AG04449 (cell line): ENCODE measurements at regions of chr9 and their contacts with region 1.

Region 1: DNA sequence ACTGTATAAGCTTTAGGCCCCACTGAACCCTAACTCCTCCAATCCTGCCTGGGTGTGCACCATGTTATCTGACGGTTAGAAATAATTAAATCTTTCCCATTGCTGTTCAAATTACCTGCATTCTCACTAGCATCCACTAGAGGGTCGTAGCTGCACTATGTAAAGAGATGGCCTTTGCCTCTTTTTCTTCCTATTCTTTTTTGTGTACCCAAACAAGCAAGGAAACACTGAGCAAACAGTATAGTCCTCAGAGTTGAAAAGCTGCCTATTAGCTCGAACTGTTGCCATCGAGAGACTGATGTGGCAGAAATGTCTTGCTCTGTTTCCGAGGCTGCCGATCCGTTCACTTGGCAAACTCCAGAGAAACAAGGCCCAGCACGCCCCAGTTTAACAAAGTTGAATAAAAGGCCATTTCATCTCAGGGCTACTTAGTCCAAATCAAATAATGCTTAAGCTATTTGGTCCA is 163.8 kb upstream of the TRPM3 start:
- DNase-seq: peak; percentile 29
- H3K4me3 ChIP-seq: no peak overlapping the region
- CTCF ChIP-seq: peak; percentile 73

Region 2: DNA sequence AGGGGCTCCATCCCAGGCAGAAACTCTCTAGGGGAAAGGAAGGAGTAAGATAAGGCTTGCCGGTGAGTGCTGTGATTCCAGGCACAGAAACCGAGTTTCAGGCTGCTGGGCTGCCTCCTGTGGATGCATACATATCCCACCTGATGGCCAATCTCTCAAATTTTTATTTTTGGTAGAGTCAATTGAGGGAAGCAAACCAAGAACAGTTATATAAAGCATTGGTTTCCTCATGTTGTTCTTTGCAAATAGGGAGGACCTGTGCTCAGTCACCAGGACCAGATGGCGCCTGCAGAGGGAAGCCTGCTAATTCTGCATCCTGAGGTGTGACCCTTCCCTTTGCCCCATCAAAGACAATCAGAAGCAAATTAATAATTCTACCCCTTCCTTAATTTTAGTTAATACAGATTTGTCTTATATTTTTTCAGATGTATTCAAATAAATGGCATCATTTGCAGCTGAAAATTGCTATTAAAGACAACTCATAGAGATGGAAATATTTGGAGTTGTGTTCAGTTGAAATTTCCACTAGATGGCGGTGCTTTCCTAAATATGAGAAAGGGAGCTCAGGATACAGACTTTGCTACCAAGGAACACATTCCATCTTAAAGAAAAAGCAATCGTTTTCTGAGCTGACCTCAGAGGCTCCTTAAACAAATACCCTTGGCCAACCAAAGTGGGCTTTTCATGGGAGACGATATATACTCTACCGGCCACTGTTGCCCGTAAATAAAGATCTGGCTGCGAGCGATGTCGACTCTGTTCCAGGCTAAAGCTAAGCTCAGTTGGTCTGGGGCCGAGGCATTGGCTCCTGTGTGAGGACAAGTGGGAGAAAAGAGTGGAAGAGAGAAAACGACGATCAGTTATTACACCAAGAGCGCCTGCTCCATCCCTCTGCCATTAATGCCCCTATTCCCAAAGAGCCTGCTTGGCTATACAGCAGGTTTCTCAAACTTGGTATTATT is 645.1 kb before region 1 on chr9:
- CTCF ChIA-PET with region 1: interaction called, 25 read pairs
- POLR2A ChIA-PET with region 1: no interaction called
- DNase-seq: peak; percentile 29
- H3K4me3 ChIP-seq: no peak overlapping the region
- CTCF ChIP-seq: peak; percentile 34

Region 3: DNA sequence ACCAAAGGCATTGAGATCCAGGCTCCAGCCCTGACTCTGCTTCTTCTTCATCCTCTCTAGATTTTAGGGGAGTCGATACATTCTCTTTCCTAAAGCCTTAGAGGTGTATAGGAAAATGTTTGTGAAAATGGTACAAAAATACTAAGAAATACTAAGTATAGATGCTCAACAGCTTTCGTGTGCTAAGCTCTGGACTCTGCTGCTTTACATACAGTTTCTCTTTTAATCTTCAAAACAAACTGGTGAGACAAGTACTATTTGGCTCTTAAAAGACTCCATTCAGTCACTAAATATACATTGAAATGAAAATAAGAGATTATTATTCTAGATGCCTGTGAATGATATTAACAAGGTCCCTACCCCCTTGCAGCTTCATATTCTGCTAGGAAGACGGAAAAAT is 10.7 kb after region 1 on chr9:
- CTCF ChIA-PET with region 1: interaction called, 40 read pairs
- POLR2A ChIA-PET with region 1: no interaction called
- DNase-seq: no peak
- H3K4me3 ChIP-seq: no peak overlapping the region
- CTCF ChIP-seq: no peak

Region 4: DNA sequence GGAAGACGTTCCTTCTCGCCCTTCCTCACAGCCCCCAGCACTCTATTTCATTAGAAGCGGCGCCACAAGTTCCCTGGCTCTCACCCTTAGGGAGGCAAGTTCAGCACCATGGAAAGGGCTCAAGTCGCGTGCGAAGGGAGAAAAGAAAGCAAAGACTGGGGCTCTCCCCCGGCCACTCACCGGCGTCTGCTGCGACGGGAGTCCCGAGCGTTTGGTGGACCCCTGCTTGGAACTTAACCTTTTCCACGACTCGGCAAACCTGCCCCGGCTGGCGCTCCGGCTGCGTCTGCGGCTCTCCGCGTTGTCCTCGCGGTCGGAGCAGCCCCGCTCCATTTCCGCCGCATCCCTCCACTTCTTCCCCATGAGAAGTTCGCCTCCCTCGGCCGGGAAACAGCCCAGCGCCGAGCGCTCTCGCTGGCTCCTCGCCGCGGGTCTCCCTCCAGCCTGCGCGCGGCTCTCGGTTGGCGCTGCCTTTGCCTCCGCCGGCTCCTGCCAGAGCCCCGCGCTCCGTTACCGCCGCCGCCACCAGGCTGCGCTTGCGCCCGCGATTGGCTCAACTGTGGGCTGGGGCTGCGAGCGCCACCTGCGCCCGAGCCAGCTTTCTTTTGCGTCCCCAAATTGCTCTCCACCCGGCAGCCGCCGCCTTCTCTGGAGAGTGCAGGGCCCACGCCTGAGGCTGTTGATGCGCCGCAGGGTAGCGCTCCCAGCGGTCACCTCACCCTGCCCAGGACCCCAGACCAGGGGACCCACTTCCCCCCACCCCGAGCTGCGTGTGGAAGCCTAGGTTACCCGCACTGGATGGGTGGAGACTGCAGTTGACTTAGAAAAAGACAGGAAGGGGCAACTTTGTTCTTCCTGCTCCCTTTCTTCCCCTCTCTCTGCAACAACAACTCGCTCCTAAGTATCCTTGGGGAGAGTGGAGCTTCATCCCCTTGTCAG is 161.5 kb after region 1 on chr9:
- CTCF ChIA-PET with region 1: interaction called, 14 read pairs
- POLR2A ChIA-PET with region 1: no interaction called
- DNase-seq: no peak
- H3K4me3 ChIP-seq: peak overlapping the region; percentile 53
- CTCF ChIP-seq: no peak

Region 5: DNA sequence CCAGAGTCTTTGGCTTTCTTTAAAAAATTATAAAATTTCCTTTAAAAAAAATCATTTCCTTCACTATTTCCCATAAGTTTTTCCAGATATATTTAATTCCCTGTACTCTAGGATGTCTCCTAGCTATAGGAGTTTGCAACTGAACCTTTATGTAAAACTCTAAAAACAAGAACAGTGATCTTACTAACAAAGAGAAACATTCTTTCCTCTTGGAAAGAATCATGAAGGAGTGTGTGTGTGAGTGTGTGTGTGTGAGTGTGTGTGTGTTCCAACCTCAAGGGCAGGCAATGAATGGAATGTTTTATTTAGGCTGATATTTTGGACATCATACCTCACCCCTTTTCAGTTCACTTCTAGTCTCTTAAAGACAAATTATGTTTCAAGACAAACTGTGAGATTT is 173.9 kb after region 1 on chr9:
- CTCF ChIA-PET with region 1: no interaction called
- POLR2A ChIA-PET with region 1: no interaction called
- DNase-seq: no peak
- H3K4me3 ChIP-seq: no peak overlapping the region
- CTCF ChIP-seq: no peak

Region 6: GRCh38 chr9:71819115-71819739 is 534.0 kb after region 1 on chr9:
- CTCF ChIA-PET with region 1: interaction called, 20 read pairs
- POLR2A ChIA-PET with region 1: no interaction called
- DNase-seq: no peak
- H3K4me3 ChIP-seq: no peak overlapping the region
- CTCF ChIP-seq: peak; percentile 37